CD4-positive, alpha-beta memory T cell (primary cell): ENCODE measurements at regions of chr5 and their contacts with region 1.

Region 1: GRCh38 chr5:88268385-88269184 is at the start of gene TMEM161B:
- DNase-seq: peak; percentile 92 to 98 (median 96)
- H3K4me3 ChIP-seq: peak within 1 kb of the TSS; percentile 80 to 94
- H3K4me3 Mint-ChIP-seq: peak within 1 kb of the TSS; percentile 95 to 100 (median 100)
- H3K27ac ChIP-seq: peak within 1 kb of the TSS; percentile 87
- H3K27ac Mint-ChIP-seq: peak within 1 kb of the TSS; percentile 97 to 100 (median 99)
- H3K4me1 ChIP-seq: peaks cover 50% of the 10 kb centered on the region
- H3K4me1 Mint-ChIP-seq: peaks cover 34 to 75% (median 50%) of the 10 kb centered on the region in 4 donors
- H3K27me3 ChIP-seq: no peaks in the 10 kb centered on the region
- H3K27me3 Mint-ChIP-seq: no peaks in the 10 kb centered on the region
- total RNA-seq, gene TMEM161B: 32.3 to 33.7 TPM

Region 2: GRCh38 chr5:86617756-86618576 is 1650.6 kb before region 1 on chr5 and contains the start of gene COX7C:
- CTCF ChIA-PET with region 1: no interaction called
- POLR2A ChIA-PET with region 1: no interaction called
- intact Hi-C with region 1: loop called (anchors 1 kb)
- DNase-seq: peak; percentile 92 to 96 (median 95)
- H3K4me3 ChIP-seq: peak within 1 kb of the TSS; percentile 82 to 98
- H3K4me3 Mint-ChIP-seq: peak within 1 kb of the TSS; percentile 95 to 100 (median 100)
- H3K27ac ChIP-seq: peak within 1 kb of the TSS; percentile 98
- H3K27ac Mint-ChIP-seq: peak within 1 kb of the TSS; percentile 97 to 100 (median 100)
- H3K4me1 ChIP-seq: peaks cover 17% of the 10 kb centered on the region
- H3K4me1 Mint-ChIP-seq: peaks cover 15 to 36% (median 27%) of the 10 kb centered on the region in 4 donors
- H3K27me3 ChIP-seq: no peaks in the 10 kb centered on the region
- H3K27me3 Mint-ChIP-seq: peaks cover 3 to 9% of the 10 kb centered on the region in 2 donors
- total RNA-seq, gene COX7C: 474 to 489 TPM

Region 3: DNA sequence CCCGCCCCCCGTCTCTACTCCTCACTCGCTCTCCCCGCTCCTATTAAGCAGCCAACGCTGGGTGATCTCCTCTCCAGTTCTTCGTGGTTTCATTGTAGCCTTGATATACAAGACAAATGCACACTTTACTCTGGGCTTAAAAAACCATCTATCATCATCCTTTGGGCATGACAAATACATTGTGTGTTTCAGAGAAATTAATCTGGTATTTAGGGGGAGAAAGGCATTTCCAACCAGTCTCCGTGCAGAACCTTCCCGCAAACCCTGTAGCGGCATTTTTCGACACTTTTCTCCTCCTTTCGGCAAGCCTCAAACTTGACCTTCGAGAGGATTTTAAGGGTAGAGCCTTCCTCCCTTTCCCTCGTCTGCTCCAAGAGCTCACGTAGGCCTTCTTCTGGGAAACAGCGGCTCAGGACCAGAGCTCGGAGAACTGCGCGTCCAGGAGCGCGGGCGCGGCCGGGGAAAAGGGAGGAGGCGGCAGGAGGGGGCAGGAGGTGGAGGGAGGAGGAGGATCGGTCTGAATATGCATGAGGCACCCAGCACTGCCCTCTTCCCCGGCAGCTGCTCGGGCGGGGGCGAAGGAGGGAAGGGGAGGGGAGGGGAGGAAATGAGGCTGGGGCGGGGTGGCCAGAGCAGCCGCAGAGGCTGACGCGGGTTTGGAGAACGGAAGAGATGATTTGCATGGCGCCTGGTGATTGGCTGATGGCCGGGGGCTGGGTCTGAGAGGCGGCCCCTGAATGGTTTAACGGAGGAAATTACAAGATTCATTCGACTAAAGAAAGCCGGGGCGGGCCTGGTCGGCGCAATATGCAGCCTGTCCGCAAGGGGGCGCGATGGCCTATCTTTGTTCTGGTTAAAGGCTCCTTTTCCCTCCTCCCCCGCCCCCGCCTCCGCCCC is 127.5 kb before region 1 on chr5:
- CTCF ChIA-PET with region 1: no interaction called
- POLR2A ChIA-PET with region 1: no interaction called
- intact Hi-C with region 1: loop called (anchors 1 kb)
- DNase-seq: peak; percentile 84 to 89 (median 87)
- H3K4me3 ChIP-seq: peak overlapping the region; percentile 34 to 49
- H3K4me3 Mint-ChIP-seq: no peak overlapping the region
- H3K27ac ChIP-seq: no peak overlapping the region
- H3K27ac Mint-ChIP-seq: no peak overlapping the region
- H3K4me1 ChIP-seq: peaks cover 39% of the 10 kb centered on the region
- H3K4me1 Mint-ChIP-seq: peaks cover 11 to 24% (median 16%) of the 10 kb centered on the region in 4 donors
- H3K27me3 ChIP-seq: peaks cover 44% of the 10 kb centered on the region
- H3K27me3 Mint-ChIP-seq: peaks cover 23 to 26% of the 10 kb centered on the region in 2 donors

Region 4: DNA sequence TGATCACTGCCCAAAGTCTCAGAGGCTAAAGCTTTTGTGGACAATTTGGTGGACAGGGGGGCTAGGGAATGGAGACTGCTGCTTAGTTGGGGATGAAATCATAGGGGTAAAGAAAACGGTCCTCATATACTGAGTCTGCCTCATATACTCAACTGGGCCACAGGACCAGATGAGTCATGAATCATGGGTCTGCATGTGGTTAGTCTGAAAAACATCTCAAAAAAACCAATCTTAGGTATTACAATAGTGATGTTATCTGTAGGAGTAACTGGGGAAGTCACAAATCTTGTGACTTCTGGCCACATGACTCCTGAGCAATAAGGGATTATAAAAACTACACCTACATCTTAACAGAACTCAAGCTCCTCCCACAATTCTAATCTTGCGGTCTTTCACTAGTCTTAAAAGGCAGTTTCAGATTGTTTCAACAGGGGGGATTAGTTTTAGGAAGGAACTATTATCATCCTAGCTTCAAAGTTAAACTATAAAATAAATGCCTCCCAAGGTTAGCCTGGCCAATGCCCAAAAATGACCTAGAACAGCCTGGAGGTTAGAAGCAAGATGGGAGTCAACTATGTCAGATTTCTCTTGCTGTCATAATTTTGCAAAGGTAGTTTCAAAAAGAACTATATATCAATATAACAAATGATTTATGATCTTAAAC is 17.4 kb before region 1 on chr5:
- CTCF ChIA-PET with region 1: no interaction called
- POLR2A ChIA-PET with region 1: no interaction called
- intact Hi-C with region 1: no loop called
- DNase-seq: peak in 4 of 5 donors; percentile 1 to 64 (median 14)
- H3K4me3 ChIP-seq: no peak overlapping the region
- H3K4me3 Mint-ChIP-seq: peak overlapping the region in 4 of 8 donors; percentile 6 to 51 (median 34)
- H3K27ac ChIP-seq: no peak overlapping the region
- H3K27ac Mint-ChIP-seq: peak overlapping the region in 5 of 7 donors; percentile 15 to 72 (median 50)
- H3K4me1 ChIP-seq: peaks cover 21% of the 10 kb centered on the region
- H3K4me1 Mint-ChIP-seq: peaks cover 36 to 77% (median 56%) of the 10 kb centered on the region in 4 donors
- H3K27me3 ChIP-seq: no peaks in the 10 kb centered on the region
- H3K27me3 Mint-ChIP-seq: no peaks in the 10 kb centered on the region

Region 5: DNA sequence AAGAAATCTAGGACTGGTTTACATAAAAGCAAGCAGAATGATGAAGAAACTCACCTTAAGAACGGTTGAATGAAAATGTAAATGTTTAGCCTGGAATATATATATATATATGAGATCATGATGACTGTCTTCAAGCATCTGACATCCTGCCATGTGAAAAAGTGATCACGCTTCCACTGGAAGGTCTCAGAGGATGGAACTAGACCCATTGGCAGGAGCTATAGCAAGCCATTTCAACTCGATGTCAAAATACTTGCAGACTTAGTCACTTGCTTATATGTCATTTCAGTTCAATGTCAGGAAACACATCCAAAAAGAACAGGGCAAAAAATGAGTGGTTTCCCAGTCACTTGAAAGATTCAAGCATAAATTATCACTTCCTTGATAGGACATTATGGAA is 22.2 kb after region 1 on chr5:
- CTCF ChIA-PET with region 1: no interaction called
- POLR2A ChIA-PET with region 1: no interaction called
- intact Hi-C with region 1: no loop called
- DNase-seq: no peak
- H3K4me3 ChIP-seq: no peak overlapping the region
- H3K4me3 Mint-ChIP-seq: no peak overlapping the region
- H3K27ac ChIP-seq: no peak overlapping the region
- H3K27ac Mint-ChIP-seq: peak overlapping the region in 1 of 7 donors; percentile 12
- H3K4me1 ChIP-seq: no peaks in the 10 kb centered on the region
- H3K4me1 Mint-ChIP-seq: no peaks in the 10 kb centered on the region
- H3K27me3 ChIP-seq: no peaks in the 10 kb centered on the region
- H3K27me3 Mint-ChIP-seq: no peaks in the 10 kb centered on the region

Region 6: DNA sequence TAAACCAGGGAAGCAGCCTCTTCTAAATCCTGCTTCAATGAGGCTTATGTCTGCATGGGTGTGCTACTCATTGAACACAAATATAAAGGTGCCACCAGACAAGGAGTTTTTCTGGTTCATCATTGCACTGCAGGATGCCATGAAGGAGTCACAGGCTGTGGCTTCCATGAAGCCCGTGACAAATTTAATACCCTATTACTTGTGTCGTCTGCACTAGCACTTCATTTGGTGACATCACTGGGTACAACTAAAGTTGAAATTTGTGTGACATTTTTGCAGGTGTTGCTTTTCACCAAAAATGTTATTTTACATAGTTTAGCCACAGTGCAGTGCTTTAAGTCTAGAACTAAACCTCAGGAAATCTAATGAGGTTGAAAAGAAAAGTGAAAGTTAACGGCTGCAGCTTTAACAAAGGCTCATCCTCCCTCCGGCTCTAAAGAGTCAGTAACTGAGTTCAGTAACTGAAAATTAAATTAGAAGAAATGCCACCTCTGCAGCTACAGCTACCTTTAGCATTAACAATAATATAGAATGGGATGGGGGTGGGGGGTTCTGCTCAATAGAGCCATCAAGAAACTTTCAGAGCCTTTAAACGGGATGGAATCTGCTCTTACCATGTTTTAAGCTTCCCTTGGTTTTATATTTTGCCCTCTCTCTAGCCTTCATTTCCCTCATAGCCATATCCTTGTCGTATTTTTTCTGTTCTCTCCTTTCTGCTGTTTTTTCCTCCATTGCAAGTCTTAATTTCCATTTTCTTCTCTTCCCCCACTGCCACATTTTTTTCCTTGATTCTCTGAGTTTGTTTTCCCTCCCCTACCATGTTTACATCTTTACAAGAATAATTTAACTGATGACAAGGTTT is 233.8 kb after region 1 on chr5:
- CTCF ChIA-PET with region 1: no interaction called
- POLR2A ChIA-PET with region 1: no interaction called
- intact Hi-C with region 1: loop called (anchors 5 kb)
- DNase-seq: peak in 4 of 5 donors; percentile 24 to 35 (median 34)
- H3K4me3 ChIP-seq: peak overlapping the region; percentile 55
- H3K4me3 Mint-ChIP-seq: peak overlapping the region; percentile 86 to 98 (median 93)
- H3K27ac ChIP-seq: peak overlapping the region; percentile 36
- H3K27ac Mint-ChIP-seq: peak overlapping the region; percentile 38 to 96 (median 92)
- H3K4me1 ChIP-seq: peaks cover 6% of the 10 kb centered on the region
- H3K4me1 Mint-ChIP-seq: peaks cover 8 to 15% (median 11%) of the 10 kb centered on the region in 4 donors
- H3K27me3 ChIP-seq: no peaks in the 10 kb centered on the region
- H3K27me3 Mint-ChIP-seq: peaks cover 0 to 6% of the 10 kb centered on the region in 2 donors

Region 7: GRCh38 chr5:88724201-88724600 is 455.6 kb after region 1 on chr5:
- CTCF ChIA-PET with region 1: no interaction called
- POLR2A ChIA-PET with region 1: no interaction called
- intact Hi-C with region 1: no loop called
- DNase-seq: no peak
- H3K4me3 ChIP-seq: no peak overlapping the region
- H3K4me3 Mint-ChIP-seq: no peak overlapping the region
- H3K27ac ChIP-seq: no peak overlapping the region
- H3K27ac Mint-ChIP-seq: no peak overlapping the region
- H3K4me1 ChIP-seq: no peaks in the 10 kb centered on the region
- H3K4me1 Mint-ChIP-seq: no peaks in the 10 kb centered on the region
- H3K27me3 ChIP-seq: no peaks in the 10 kb centered on the region
- H3K27me3 Mint-ChIP-seq: peaks cover 16 to 27% of the 10 kb centered on the region in 2 donors